PC-9 (cell line): ENCODE measurements at regions of chr17 and their contacts with region 1.

Region 1: GRCh38 chr17:4287710-4288109 is 23.9 kb upstream of the ANKFY1 start:
- DNase-seq: no peak
- H3K4me3 ChIP-seq: no peak overlapping the region
- H3K27ac ChIP-seq: no peak overlapping the region
- H3K4me1 ChIP-seq: no peaks in the 10 kb centered on the region
- H3K27me3 ChIP-seq: no peaks in the 10 kb centered on the region
- CTCF ChIP-seq: no peak

Region 2: GRCh38 chr17:3447625-3448024 is 840.1 kb before region 1 on chr17:
- CTCF ChIA-PET with region 1: no interaction called
- POLR2A ChIA-PET with region 1: interaction called, 17 read pairs
- intact Hi-C with region 1: no loop called
- DNase-seq: no peak
- H3K4me3 ChIP-seq: no peak overlapping the region
- H3K27ac ChIP-seq: no peak overlapping the region
- H3K4me1 ChIP-seq: no peaks in the 10 kb centered on the region
- H3K27me3 ChIP-seq: peaks cover 15% of the 10 kb centered on the region; the same call in 1 of the 2 replicates
- CTCF ChIP-seq: peak; percentile 31

Region 3: GRCh38 chr17:4329838-4330237 is 42.1 kb after region 1 on chr17:
- CTCF ChIA-PET with region 1: no interaction called
- POLR2A ChIA-PET with region 1: interaction called, 13 read pairs
- intact Hi-C with region 1: no loop called
- DNase-seq: peak; percentile 37 to 96
- H3K4me3 ChIP-seq: peak overlapping the region; percentile 29; the same call in 1 of the 2 replicates
- H3K27ac ChIP-seq: peak overlapping the region; percentile 85
- H3K4me1 ChIP-seq: peaks cover 69% of the 10 kb centered on the region
- H3K27me3 ChIP-seq: no peaks in the 10 kb centered on the region
- CTCF ChIP-seq: no peak